ENCODE measurements at regions of chr14 and their contacts with region 1.

Region 1: DNA sequence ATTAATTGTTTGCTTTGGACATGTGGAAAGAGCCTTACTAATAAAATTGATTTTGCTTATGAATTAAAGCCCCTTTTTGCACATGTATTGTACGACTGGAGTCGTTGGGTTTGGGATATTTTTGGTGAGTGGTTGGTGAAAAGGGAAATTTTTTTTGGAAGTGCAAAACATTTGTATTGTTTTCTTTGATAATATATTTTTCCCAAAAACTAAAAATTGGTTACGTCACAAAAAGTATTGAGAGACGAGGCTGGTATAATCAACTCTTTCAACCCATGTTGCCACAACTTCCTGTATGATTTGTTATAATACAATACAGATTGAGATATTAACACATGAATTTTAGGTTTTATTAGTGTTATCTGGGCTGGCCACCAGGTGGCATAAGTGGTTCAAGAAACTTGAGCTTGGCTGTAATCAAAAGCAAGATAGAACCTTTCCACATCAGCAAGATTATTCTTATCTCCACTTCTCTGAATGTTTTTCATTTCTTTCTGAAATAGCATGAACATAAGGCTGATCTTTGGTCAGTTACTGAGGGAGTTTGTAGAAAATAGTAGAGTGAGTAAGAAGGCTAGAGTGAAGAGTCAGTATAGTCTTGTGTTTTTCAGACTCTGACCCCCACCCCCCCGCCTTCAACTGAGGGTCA is 8.7 kb downstream of the NGDN start:
- DNase-seq: peak in 1 of 2 donors; percentile 73
- H3K4me3 ChIP-seq: no peak overlapping the region
- H3K27ac ChIP-seq: no peak overlapping the region
- H3K4me1 ChIP-seq: no peaks in the 10 kb centered on the region
- H3K27me3 ChIP-seq: no peaks in the 10 kb centered on the region
- CTCF ChIP-seq: peak; percentile 42 to 67 (median 62)

Region 2: DNA sequence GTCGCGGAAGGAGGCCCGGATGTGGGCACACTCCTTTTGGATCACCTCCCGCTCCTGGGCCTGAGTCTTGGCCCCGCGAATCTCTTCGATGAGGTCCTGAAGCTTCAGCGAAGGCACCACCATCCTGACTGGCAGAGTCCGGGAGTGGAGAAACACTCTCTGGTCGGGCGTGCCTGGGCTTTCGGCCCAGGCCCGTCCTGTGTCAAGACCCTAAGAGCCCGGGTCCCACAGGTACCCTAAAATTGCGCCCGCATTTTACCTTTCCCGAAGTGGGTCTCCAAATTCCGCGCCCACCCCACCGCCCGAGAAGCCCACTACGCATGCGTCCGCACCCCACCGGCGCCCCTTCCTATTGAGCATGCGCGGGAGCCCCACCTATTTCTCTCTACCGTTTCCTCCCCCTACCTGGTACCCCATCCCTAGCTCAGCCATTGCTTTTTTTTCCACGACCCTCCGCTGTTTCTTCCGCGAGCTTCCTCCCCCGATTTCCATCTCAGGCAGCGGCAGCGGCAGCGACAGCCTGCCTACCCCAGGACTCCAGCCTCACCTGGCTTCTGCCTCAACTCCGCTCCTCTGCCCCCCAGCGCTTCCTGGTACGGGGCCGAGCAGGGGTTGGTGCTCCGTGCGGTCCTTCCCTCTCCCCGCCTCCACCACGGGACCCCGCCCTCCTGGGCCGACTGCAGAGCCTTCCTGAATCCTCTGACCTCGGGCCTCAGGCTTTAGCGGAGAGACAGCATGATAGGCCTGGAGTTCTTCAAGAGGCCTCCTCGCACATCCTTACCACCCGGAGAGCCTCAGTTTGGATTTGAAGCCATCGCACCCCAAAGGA is 89.2 kb after region 1 on chr14 and contains the start of gene AP1G2:
- intact Hi-C with region 1: loop called (anchors 1 kb)
- DNase-seq: peak; percentile 42 to 86
- H3K4me3 ChIP-seq: peak within 1 kb of the TSS; percentile 65 to 68
- H3K27ac ChIP-seq: peak within 1 kb of the TSS; percentile 39 to 41
- H3K4me1 ChIP-seq: peaks cover 0 to 8% of the 10 kb centered on the region in 2 donors
- H3K27me3 ChIP-seq: no peaks in the 10 kb centered on the region
- CTCF ChIP-seq: no peak
- total RNA-seq, gene AP1G2: 56.2 TPM

Measured in ascending aorta (tissue), 2 donors.